ENCODE measurements at regions of chr4 and their contacts with region 1.

Region 1: DNA sequence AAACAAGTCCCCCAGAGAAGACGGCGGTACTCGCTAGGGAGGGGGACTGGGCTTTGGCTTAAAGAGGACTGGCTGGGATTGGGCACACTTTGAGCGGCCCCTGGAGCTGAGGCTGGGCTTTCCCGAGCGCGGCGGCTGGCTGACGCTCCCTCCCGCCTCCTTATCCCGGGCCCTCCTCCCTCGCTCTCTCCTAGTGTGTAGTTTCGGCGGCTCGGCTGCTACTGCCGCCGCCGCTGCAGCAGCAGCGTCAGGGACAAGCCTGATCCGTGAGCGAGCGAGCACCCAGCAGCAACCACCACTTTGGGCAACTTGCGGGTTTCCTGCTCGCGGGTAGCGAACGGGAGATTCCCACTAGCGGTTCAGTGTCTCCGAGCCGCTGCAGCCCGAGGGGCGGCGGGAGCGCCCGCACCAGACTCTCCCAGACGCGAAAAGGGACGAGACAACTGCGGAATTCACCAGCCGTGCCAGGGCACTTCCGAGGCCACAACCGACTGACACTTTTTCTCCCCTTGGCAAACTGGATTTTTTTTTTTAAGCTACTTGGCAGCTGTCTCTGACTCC is 629 bp upstream of the PCDH7 start:
- DNase-seq: peak; percentile 86
- H3K4me3 ChIP-seq: peak overlapping the region; percentile 62 to 92 (median 80)
- H3K27ac ChIP-seq: peak overlapping the region; percentile 78 to 89 (median 84)
- H3K4me1 ChIP-seq: peaks cover 0 to 10% (median 5%) of the 10 kb centered on the region in 4 donors
- H3K27me3 ChIP-seq: peaks cover 0 to 5% (median 0%) of the 10 kb centered on the region in 3 donors
- CTCF ChIP-seq: no peak
- EP300 ChIP-seq: no peak
- POLR2A ChIP-seq: peak in 1 of 2 donors; percentile 36

Region 2: DNA sequence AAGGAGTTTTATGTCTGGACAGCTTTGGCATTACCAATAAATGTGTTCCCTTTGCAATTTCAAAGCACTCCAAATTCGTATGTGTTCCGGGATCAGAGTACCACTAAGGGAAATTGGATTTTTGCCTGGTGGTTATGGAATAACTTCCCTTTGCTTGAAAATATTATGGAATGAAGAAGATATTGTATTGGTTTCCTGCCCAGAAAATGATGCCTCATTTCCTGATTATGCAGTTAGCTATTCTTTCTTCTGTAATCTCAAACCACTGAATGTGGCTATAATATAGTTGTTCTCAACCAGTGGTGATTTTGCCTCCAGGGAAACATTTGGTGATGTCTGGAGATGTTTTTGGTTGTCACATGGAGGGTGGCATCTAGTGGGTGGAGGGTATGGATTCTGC is 143.5 kb after region 1 on chr4:
- intact Hi-C with region 1: loop called (anchors 5 kb)
- DNase-seq: no peak
- H3K4me3 ChIP-seq: no peak overlapping the region
- H3K27ac ChIP-seq: peak overlapping the region; percentile 37 to 78 (median 62)
- H3K4me1 ChIP-seq: peaks cover 0 to 84% (median 61%) of the 10 kb centered on the region in 4 donors
- H3K27me3 ChIP-seq: no peaks in the 10 kb centered on the region
- CTCF ChIP-seq: no peak
- EP300 ChIP-seq: no peak
- POLR2A ChIP-seq: no peak

Region 3: GRCh38 chr4:30903502-30904217 is 184.1 kb after region 1 on chr4:
- intact Hi-C with region 1: loop called (anchors 10 kb)
- DNase-seq: no peak
- H3K4me3 ChIP-seq: no peak overlapping the region
- H3K27ac ChIP-seq: peak overlapping the region in 1 of 4 donors; percentile 9
- H3K4me1 ChIP-seq: peaks cover 0 to 32% (median 27%) of the 10 kb centered on the region in 4 donors
- H3K27me3 ChIP-seq: no peaks in the 10 kb centered on the region
- CTCF ChIP-seq: no peak
- EP300 ChIP-seq: no peak
- POLR2A ChIP-seq: no peak

Region 4: GRCh38 chr4:31089815-31090214 is 370.3 kb after region 1 on chr4:
- intact Hi-C with region 1: loop called (anchors 10 kb)
- DNase-seq: no peak
- H3K4me3 ChIP-seq: no peak overlapping the region
- H3K27ac ChIP-seq: peak overlapping the region in 1 of 4 donors; percentile 63
- H3K4me1 ChIP-seq: peaks cover 0 to 51% (median 21%) of the 10 kb centered on the region in 4 donors
- H3K27me3 ChIP-seq: no peaks in the 10 kb centered on the region
- CTCF ChIP-seq: no peak
- EP300 ChIP-seq: no peak
- POLR2A ChIP-seq: no peak

Region 5: DNA sequence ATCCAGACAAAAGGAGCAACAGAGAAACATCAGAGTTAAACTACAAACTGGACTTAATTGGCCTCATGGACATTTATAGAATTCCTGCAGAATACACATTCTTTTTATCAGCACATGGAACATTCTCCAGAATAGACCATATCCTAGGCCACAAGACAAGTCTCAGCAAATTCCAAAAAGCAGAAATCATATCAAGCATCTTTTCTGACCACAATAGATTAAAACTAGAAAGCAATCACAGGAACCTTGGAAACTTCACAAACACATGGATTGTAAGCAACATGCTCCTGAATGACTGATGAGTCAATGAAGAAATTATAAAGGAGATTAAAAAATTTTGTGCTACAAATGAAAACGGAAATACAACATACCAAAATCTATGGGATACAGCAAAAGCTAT is 527.3 kb after region 1 on chr4:
- intact Hi-C with region 1: no loop called
- DNase-seq: no peak
- H3K4me3 ChIP-seq: no peak overlapping the region
- H3K27ac ChIP-seq: no peak overlapping the region
- H3K4me1 ChIP-seq: no peaks in the 10 kb centered on the region
- H3K27me3 ChIP-seq: no peaks in the 10 kb centered on the region
- CTCF ChIP-seq: no peak
- EP300 ChIP-seq: no peak
- POLR2A ChIP-seq: no peak